Colonic mucosa (tissue), 4 donors: ENCODE measurements at regions of chr5 and their contacts with region 1.

Region 1: DNA sequence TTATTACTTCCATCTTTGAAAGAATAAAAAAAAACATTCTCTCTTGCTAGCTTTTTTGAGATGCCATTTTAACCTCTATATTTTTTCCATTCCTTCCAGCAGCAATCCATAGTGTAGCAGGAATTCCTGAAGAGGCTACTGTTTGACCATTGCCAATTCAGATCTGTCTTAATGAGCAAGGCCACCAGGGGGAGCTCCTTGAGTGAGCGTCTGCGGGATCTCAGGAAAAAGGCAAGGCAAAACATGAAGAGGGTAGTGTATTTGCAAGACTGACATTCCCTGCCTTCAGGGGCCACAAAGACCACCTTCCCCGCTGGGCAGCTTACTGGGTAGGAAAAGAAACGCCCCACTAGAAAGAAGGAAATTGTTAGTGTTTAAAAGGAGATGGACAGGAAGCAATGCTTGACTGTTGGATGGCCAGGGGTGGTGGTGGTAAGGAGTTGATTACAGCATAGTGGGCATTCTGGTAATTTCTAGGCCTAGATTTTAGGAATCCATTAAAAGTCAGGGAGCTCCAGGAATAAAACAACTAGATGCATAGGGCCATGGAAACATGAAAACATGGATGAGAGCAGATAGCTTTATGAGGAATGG is 206.6 kb upstream of the HAPLN1 start:
- DNase-seq: peak; percentile 80
- H3K4me3 ChIP-seq: no peak overlapping the region
- H3K27ac ChIP-seq: no peak overlapping the region
- H3K4me1 ChIP-seq: peaks cover 5% of the 10 kb centered on the region
- H3K27me3 ChIP-seq: no peaks in the 10 kb centered on the region
- CTCF ChIP-seq: peak; percentile 67

Region 2: DNA sequence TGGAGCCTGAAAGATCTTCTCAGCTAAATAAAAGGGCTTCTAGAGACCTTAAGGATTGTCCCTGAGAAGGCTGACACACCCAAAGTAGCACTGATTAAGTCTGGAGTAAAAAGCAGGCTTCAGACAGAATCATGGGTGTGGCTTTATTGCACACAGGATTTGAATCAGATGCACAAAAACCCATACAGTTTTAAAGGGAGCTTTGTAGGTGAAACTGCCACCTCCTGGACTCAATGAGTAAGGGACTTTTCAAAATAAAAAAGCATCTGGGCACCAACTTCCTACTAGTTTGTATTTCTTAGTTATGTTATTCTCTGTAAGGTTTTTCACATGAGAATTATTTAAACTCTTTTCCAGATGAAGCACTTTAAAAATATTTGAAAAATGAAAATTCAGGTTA is 328.1 kb after region 1 on chr5:
- intact Hi-C with region 1: loop called (anchors 10 kb)
- DNase-seq: no peak
- H3K4me3 ChIP-seq: no peak overlapping the region
- H3K27ac ChIP-seq: no peak overlapping the region
- H3K4me1 ChIP-seq: no peaks in the 10 kb centered on the region
- H3K27me3 ChIP-seq: no peaks in the 10 kb centered on the region
- CTCF ChIP-seq: no peak